Right ventricle myocardium inferior (tissue), 1 donor: ENCODE measurements at regions of chr5 and their contacts with region 1.

Region 1: DNA sequence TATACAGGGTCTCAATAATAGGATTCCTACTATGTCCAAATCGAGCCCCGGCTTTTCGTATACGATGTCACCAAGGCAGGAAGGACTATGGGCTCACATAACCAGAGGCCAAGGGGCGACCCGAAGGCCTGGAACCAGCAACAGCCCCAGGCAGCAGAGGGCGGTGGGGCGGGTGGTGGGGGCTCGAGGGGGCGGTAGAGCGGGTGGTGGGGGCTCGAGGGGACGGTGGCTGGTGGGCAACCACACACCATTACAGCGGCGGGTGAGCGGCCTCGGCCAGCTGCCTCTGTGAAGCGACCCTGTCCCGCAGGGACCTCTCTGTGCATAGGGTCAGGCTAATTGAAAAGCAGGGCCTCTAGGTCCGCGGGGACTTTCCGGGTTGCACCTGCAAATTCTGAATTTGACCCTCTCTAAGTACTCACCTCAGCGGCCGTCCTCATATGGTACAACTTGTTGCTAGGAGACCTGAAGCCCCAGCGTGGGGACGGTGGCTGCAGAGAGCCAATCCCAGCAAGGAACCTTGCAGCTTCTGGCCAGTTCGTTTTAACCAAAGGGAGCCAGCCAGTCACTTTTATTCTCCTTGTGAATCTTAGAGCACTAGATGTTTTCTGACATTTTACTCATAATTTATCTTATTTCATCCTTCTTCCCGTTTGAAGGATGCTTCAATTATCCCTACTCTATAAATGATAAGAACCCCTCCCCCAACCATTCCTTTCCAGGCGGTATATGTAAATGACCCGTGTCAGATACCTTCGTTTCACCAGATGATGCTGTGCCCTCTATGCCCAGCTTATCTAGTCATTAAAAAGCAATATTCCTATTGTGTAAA is at the start of gene NME5:
- DNase-seq: peak; percentile 82
- ATAC-seq: peak; percentile 84
- total RNA-seq, gene NME5: 3.9 TPM

Region 2: DNA sequence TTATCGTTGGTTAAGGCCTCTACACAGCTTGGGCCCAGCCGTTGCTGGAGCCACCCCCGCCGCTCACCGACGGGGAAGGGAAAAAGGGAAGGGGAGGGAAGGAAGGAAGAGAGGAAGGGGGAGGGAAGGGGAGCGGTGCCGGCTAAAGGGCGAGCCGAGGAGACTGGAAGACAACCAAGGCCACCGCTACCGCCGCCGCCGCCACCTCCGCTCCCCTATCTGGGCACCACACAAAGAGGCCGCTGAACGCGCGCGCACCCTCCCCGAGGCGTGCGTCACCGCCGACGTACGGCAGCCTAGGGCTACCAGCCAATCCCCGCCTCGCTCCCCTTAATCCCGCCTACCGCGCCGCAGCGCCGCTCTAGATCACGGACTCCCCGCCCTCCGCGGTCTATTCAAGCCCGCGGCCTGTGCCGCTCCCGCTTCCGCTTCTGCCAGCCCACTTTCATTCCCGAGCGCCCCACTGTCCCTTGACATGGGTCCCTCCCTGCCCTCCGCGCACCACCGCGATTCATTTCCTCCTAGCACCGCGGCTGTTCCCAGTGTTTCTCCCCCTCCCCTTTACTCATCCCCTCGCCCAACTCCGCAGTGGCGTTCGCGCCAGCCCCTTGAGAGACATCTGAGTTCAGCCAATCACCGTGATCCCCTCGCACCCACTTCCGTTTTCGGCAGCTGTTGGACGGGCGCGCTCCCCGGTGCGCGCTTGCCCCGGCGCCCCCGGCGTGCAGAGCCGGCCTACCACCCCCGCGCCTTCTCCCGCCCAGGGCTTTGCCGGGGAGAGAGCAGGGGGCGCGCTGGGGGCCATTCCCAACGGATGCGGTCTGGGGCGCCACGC is 384.8 kb before region 1 on chr5 and contains the start of gene HNRNPA0:
- intact Hi-C with region 1: loop called (anchors 10 kb)
- DNase-seq: peak; percentile 99
- ATAC-seq: peak; percentile 96
- total RNA-seq, gene HNRNPA0: 12.1 TPM

Region 3: DNA sequence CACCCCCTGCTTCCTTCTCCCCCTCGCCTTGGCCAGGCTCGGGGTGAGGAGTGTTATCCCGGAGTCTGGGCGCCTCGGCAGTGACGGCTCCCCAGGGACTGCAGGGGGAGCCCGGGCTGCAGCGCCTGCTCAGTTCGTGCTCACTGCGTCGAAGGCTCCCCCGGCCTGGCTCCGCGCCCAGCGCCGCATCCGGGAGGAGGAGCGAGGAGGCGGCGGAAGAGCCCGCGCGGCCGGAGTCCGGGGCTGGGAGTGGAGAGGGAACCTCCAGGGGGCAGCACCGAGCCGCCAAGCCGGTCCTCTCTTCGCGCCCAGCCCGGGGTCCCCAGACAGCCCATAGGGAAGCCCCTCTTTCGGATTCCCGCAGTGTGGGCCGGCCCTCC is 324.8 kb after region 1 on chr5:
- intact Hi-C with region 1: no loop called
- DNase-seq: peak; percentile 98
- ATAC-seq: peak; percentile 83